Mucosa of descending colon (tissue), 3 donors: ENCODE measurements at regions of chr10 and their contacts with region 1.

Region 1: DNA sequence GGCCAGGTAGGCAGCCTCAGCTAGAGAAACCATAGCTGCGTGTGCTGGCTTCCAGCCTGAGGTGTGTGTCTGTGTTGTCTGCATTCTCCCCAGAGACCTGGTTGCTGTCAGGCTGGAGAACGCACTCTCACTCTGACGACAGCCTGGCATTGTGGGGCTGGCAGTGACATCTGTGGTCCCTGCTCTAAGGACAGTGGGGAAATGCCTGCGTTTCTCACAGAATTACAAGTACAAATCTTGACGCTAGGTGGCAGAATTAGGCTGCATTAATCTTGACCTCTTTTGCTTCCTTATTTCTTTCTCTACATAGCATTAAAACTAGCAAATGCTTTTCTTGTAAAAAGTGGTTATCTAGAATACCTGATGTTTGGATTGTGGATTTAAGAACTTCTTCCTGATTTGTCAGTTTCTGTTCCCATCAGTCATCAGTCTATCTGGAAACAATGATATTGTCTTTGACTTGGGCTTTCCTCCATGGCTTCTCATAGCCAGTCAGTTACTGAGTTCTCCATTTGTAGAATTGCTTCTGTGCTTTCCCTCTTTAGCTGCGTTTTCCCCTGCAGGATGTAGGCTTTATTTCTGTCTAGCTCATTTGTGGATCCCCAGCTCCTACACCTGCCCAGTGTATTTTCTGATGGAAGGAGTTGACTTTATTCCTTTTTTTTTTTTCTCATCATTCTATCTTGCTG is 86.0 kb downstream of the FANK1 start:
- DNase-seq: peak in 1 of 3 donors; percentile 81
- ATAC-seq: peak; percentile 77
- H3K4me3 ChIP-seq: no peak overlapping the region
- H3K4me1 ChIP-seq: no peaks in the 10 kb centered on the region
- CTCF ChIP-seq: peak; percentile 23

Region 2: GRCh38 chr10:126504063-126504739 is 521.8 kb after region 1 on chr10:
- intact Hi-C with region 1: loop called in 1 of 2 experiments (anchors 5 kb)
- DNase-seq: peak in 2 of 3 donors; percentile 29 to 48
- ATAC-seq: peak; percentile 73
- H3K4me3 ChIP-seq: no peak overlapping the region
- H3K4me1 ChIP-seq: no peaks in the 10 kb centered on the region
- CTCF ChIP-seq: peak; percentile 31